ENCODE measurements at regions of chr16 and their contacts with region 1.

Region 1: DNA sequence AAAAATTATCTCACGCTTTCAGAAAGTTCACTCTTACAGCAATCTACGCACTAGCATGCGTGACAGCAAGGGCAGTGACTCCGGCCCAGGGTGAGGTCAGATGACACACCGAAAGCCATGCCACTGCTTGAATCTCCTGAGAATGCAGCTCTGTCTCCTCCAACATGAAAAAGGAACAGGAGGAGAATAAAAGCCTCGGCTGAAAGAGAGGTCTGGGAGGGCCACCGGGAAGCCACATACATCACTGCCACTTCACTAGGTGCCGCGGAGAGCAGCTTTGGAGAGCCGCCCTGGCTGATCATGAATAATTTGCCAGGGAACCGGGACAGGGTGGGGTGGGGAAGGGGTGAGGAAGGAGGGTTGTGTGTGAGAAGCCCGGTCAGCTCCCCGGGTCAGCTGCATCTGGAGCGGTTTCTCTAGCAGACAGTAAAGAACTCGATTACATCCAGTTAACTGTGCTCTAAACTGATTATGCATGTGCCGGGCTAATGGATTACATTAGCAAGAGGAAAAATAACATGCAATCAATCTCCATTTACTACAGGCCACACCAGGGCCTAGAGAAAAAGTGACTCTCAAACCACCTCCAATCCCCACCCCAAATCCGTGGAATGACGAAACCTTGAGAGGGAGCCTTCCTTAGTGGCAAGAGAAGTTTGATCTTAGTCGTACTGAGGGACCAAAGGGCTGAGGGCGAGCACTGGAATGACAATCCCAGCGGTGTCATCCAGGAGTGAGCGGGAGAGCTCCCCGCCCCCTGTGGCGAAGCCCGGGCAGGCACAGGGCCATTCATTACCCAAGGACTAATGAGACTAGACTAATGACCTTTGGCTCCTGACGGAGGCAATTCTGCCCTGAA is 100.3 kb downstream of the ZFHX3 start:
- DNase-seq: peak; percentile 79
- ATAC-seq: peak; percentile 99
- H3K4me3 ChIP-seq: no peak overlapping the region
- H3K27ac ChIP-seq: peak overlapping the region; percentile 40
- H3K4me1 ChIP-seq: peaks cover 33% of the 10 kb centered on the region
- H3K27me3 ChIP-seq: no peaks in the 10 kb centered on the region
- CTCF ChIP-seq: peak; percentile 62
- EP300 ChIP-seq: no peak
- POLR2A ChIP-seq: no peak
- RAD21 ChIP-seq: peak; percentile 77

Region 2: GRCh38 chr16:72832621-72833248 is 114.9 kb before region 1 on chr16:
- CTCF ChIA-PET with region 1: interaction called, 3 read pairs
- POLR2A ChIA-PET with region 1: no interaction called
- in situ Hi-C with region 1: no loop called
- intact Hi-C with region 1: loop called (anchors 1 kb)
- DNase-seq: peak; percentile 55
- ATAC-seq: peak; percentile 93
- H3K4me3 ChIP-seq: no peak overlapping the region
- H3K27ac ChIP-seq: no peak overlapping the region
- H3K4me1 ChIP-seq: no peaks in the 10 kb centered on the region
- H3K27me3 ChIP-seq: no peaks in the 10 kb centered on the region
- CTCF ChIP-seq: peak; percentile 95
- EP300 ChIP-seq: no peak
- POLR2A ChIP-seq: no peak
- RAD21 ChIP-seq: peak; percentile 93

Region 3: GRCh38 chr16:72972878-72973571 is 25.4 kb after region 1 on chr16:
- CTCF ChIA-PET with region 1: no interaction called
- POLR2A ChIA-PET with region 1: no interaction called
- in situ Hi-C with region 1: no loop called
- intact Hi-C with region 1: loop called (anchors 1 kb)
- DNase-seq: no peak
- ATAC-seq: no peak
- H3K4me3 ChIP-seq: no peak overlapping the region
- H3K27ac ChIP-seq: no peak overlapping the region
- H3K4me1 ChIP-seq: peaks cover 44% of the 10 kb centered on the region
- H3K27me3 ChIP-seq: no peaks in the 10 kb centered on the region
- CTCF ChIP-seq: no peak
- EP300 ChIP-seq: no peak
- POLR2A ChIP-seq: no peak
- RAD21 ChIP-seq: no peak

Measured in HepG2 (cell line).